ENCODE measurements at regions of chr15 and their contacts with region 1.

Region 1: GRCh38 chr15:82985688-82986441 is at the start of gene RAMAC:
- DNase-seq: peak; percentile 93
- H3K4me3 Mint-ChIP-seq: peak within 1 kb of the TSS; percentile 95
- H3K27ac Mint-ChIP-seq: peak within 1 kb of the TSS; percentile 91
- H3K4me1 Mint-ChIP-seq: peaks cover 37% of the 10 kb centered on the region
- H3K27me3 Mint-ChIP-seq: no peaks in the 10 kb centered on the region
- total RNA-seq, gene RAMAC: 24.1 TPM

Region 2: DNA sequence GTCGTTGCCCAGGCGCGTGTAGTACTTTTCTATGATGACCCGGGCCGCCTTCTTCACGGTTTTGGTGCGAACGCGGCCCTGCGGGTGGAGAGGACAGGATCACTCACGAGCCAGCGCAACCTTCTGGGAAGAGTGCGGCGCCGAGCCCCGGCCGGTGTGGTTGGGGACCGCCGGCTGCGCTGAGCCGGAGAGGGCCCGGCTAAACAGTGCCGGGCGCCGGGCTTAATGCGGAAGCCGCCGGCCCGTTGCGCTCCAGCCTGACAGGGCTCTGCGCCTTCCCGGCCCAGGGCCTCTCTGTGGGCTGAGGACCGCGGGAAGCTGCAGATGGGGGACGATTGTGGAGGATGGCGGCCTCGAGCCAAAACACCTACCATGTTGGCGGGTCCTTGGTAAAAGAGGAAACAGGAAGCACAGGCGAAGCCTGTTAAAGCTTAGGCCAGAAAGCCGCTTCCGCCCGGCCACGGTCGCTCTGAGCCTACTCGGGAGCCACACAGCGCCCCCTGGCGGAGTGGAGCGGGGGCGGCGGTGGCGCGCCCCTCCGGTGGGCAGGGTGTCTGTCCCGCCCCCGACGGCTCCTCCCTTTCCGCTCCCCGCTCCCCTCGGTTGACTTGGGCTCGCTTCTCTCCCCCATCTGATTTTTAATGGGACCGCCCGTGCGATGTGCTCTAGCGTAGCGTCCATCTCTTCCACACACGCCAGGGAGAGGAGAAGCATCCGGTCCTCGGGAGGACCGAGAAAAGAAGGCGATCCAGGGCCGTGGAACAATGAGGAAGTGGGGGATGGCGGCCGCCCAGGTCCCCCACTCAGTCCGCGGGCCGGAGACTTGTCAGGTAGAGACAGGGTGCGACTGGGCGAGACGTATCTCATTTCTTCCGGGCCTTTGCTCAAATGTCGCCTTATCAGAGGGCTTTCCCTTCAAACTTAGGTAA is 445.5 kb before region 1 on chr15 and contains the start of gene RPS17:
- CTCF ChIA-PET with region 1: interaction called, 8 read pairs
- POLR2A ChIA-PET with region 1: interaction called, 10 read pairs
- DNase-seq: peak; percentile 98
- H3K4me3 Mint-ChIP-seq: peak within 1 kb of the TSS; percentile 97
- H3K27ac Mint-ChIP-seq: peak within 1 kb of the TSS; percentile 95
- H3K4me1 Mint-ChIP-seq: peaks cover 47% of the 10 kb centered on the region
- H3K27me3 Mint-ChIP-seq: no peaks in the 10 kb centered on the region
- total RNA-seq, gene RPS17: 1,261 to 1,293 TPM

Region 3: DNA sequence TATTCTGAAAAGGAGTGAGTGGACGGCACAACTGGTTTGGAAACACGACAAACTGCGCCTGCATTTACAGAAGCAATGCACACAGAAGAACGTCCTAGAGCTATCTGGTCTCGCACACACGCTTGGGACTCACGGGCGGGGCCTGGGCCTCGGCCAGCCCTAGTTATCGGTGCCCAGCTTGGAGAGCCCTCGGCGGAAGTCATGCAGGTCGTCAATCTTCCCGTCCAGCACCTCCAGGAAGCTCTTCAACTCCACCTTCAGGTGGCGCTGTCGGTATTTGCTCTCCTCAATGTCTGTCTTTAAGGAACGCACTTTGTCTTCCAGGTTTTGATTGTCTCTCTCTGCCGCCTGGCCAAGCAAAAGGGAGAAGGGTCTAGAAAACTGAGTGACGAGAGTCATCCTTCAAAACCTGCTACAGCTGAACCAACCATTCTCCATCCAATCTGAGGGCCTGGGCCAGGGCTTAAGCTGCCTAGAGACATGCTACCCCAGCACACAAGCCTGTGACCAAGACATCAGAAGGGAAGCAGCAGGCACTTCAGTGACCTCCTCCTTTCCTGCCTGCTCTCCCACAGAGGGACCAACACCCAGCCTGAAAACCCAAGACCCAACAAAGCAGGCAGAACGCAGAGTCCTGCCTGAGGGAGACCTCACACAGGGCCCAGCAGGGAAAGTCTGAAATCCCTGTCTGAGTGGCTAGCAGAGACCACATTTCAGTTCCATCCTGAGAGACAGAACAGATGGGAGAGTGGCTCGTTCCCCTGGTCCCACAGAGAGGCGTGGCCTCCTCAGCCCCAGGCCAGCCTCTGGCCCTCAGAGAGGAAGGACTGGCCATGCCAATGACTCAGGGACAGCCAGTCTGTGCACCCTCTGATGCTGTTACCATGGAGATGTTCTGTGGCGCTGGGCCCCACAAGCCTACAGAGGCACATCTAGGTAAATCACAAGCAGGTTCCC is 136.0 kb before region 1 on chr15:
- CTCF ChIA-PET with region 1: interaction called, 15 read pairs
- POLR2A ChIA-PET with region 1: interaction called, 4 read pairs
- DNase-seq: peak; percentile 58
- H3K4me3 Mint-ChIP-seq: no peak overlapping the region
- H3K27ac Mint-ChIP-seq: no peak overlapping the region
- H3K4me1 Mint-ChIP-seq: peaks cover 6% of the 10 kb centered on the region
- H3K27me3 Mint-ChIP-seq: peaks cover 5% of the 10 kb centered on the region

Region 4: DNA sequence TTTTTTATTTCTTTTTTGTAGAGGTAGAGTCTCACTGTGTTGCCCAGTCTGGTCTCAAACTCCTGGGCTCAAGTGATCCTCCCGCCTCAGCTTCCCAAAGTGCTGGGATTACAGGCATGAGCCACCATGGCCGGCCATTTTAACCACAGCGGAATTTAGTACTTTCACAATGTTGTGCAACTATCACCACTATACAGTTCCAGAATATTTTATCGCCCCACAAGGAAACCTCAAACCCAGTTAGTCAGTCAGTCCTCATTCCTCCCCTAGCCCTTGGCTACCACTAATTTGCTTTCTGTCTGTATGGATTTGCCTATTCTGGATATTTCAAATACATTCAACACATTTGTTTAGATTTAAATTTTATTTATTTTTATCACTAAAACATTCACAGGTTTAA is 17.8 kb before region 1 on chr15:
- CTCF ChIA-PET with region 1: no interaction called
- POLR2A ChIA-PET with region 1: interaction called, 12 read pairs
- DNase-seq: no peak
- H3K4me3 Mint-ChIP-seq: no peak overlapping the region
- H3K27ac Mint-ChIP-seq: no peak overlapping the region
- H3K4me1 Mint-ChIP-seq: peaks cover 25% of the 10 kb centered on the region
- H3K27me3 Mint-ChIP-seq: peaks cover 28% of the 10 kb centered on the region

Region 5: GRCh38 chr15:83011271-83012075 is 25.6 kb after region 1 on chr15 and contains the start of gene C15orf40:
- CTCF ChIA-PET with region 1: interaction called, 17 read pairs
- POLR2A ChIA-PET with region 1: interaction called, 20 read pairs
- DNase-seq: peak; percentile 86
- H3K4me3 Mint-ChIP-seq: peak within 1 kb of the TSS; percentile 91
- H3K27ac Mint-ChIP-seq: peak within 1 kb of the TSS; percentile 91
- H3K4me1 Mint-ChIP-seq: peaks cover 51% of the 10 kb centered on the region
- H3K27me3 Mint-ChIP-seq: no peaks in the 10 kb centered on the region
- total RNA-seq, gene C15orf40: 23.8 to 25.5 TPM

Measured in activated CD4-positive, alpha-beta memory T cell treated with anti-CD3 and anti-CD28 coated beads, Interleukin-2, amount 10 ng/mL, durations not matched to agents 7 days and 5 days (primary cell).